ENCODE measurements at regions of chr11 and their contacts with region 1.

Region 1: DNA sequence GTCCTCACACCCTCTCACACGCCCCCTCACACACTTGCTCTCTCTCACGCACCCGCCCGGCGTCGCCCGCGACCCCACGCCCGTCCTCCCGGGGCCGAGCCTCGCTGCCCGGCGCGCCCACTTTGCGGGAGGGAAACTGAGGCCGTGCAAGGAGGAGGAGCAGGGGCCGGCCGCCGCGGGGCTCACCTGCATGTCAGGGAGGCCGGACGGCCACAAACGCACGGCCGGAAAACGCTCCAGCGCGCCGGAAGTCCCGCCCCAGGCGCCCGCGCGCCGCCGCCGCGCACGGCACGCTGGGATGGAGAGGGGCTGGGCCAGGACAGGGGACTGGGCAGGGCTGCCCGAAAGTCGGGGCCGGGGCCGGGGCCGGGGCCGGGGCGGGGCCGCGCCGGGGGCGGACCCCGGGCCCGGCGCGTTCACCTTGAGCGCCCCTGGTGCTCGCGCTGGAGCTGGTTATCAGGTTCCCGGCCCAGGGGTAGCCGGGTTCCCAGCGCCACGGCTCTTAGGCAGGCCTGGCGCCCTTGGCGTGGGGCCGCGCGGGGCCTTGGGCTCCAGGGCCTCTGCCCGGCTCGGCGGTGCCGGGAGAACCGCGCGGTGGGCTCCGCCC is at the start of gene CHID1:
- DNase-seq: peak; percentile 98
- H3K4me3 Mint-ChIP-seq: peak within 1 kb of the TSS; percentile 97
- H3K27ac Mint-ChIP-seq: peak within 1 kb of the TSS; percentile 94
- H3K4me1 Mint-ChIP-seq: peaks cover 18% of the 10 kb centered on the region
- H3K27me3 Mint-ChIP-seq: no peaks in the 10 kb centered on the region
- total RNA-seq, gene CHID1: 99.7 and 109 TPM in 2 replicates

Region 2: DNA sequence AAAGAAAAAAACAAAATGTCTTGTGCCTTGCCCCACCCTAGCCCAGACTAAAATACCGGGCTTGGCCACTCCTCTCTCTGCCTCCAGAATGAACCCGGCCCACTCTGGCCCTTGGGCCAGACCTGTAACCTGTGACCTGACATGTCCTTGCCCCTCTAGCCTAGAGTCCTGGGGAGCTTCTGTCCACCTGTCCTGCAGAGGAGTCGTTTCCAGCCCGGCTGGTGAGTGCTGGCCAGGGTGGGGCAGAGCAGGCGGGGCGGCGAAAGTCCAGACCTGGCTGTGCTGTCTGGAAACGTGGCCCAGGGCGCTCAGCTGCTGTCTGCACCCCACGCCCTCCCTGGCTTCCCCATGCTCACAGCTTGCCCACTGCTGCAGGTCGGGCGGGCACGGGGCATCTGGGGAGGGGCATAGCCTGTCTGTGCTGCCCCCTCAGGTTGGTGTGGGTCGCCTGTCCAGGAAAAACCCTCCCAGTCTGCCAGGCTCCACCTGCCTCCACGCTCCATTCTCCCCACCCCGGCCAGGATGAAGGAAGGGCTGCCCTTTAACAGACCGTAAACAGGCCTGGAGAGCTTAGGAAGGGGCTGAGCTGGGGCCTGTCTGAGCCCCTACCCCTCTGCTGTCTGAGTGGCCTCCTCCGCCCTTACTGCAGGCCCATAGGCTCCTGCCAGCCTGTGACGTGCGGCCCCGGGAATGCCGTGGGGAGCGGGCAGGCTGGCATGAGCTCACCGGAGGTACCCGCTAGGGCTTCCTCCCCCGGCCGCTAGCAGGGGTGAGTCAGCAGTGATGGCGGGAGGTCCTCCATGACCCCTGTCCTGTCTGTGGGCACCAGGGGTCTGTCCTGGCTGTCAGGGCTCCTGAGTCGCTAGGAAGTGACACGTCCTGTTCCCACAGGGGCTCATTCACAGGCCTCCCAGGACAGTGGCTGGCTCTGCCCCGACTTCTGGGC is 76.0 kb before region 1 on chr11:
- intact Hi-C with region 1: no loop called
- DNase-seq: no peak
- H3K4me3 Mint-ChIP-seq: peak overlapping the region; percentile 74
- H3K27ac Mint-ChIP-seq: no peak overlapping the region
- H3K4me1 Mint-ChIP-seq: peaks cover 15% of the 10 kb centered on the region
- H3K27me3 Mint-ChIP-seq: peaks cover 21% of the 10 kb centered on the region

Region 3: DNA sequence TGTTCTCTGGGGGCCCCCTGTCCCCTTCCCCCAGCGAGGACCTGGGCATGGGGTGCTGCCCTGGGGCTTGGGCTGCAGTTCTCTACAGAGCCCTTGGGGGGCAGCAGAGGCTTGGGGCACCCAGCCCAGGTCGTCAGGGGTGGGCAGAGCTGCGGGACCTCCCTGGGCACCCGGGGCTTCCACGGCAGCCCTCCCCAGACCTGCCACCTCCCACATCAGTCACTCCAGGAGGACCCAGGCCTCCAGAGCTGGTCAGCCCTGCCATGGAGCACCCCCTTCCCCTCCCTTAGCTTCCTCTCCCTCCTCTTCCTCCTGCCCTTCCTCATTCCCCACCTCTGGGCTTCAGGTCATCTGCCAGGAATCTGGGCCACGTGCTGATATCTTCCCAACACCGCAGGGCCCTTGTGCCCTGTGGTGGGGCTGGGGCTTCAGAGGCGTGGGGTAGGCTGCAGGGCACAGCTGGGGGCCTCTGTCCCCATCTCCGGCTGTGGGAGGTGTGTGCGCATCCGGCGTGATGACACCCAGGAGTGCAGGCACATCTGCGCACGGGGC is 62.2 kb before region 1 on chr11:
- intact Hi-C with region 1: loop called (anchors 2 kb)
- DNase-seq: peak; percentile 92
- H3K4me3 Mint-ChIP-seq: peak overlapping the region; percentile 73
- H3K27ac Mint-ChIP-seq: no peak overlapping the region
- H3K4me1 Mint-ChIP-seq: peaks cover 5% of the 10 kb centered on the region
- H3K27me3 Mint-ChIP-seq: peaks cover 7% of the 10 kb centered on the region

Region 4: DNA sequence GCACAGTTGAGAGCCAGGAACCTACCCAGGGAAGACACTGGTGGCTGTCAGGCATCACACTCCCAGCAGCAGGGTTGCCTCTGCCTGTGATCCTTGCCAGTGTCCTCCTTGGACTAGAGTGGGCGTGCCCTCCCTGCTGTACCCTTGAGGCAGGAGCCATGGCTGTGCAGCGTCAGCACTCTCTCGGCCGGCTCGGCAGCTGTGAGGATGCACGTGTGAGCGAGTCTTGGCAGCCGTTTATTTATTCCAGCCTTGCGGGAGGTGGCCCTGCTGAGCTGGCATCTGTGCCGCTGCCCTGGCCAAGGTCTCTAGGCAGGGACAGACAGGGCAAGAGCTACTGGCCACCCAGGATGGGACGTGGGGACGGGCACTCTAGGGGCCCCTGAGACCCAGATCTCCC is 34.2 kb before region 1 on chr11:
- intact Hi-C with region 1: loop called (anchors 2 kb)
- DNase-seq: no peak
- H3K4me3 Mint-ChIP-seq: no peak overlapping the region
- H3K27ac Mint-ChIP-seq: no peak overlapping the region
- H3K4me1 Mint-ChIP-seq: no peaks in the 10 kb centered on the region
- H3K27me3 Mint-ChIP-seq: no peaks in the 10 kb centered on the region

Region 5: DNA sequence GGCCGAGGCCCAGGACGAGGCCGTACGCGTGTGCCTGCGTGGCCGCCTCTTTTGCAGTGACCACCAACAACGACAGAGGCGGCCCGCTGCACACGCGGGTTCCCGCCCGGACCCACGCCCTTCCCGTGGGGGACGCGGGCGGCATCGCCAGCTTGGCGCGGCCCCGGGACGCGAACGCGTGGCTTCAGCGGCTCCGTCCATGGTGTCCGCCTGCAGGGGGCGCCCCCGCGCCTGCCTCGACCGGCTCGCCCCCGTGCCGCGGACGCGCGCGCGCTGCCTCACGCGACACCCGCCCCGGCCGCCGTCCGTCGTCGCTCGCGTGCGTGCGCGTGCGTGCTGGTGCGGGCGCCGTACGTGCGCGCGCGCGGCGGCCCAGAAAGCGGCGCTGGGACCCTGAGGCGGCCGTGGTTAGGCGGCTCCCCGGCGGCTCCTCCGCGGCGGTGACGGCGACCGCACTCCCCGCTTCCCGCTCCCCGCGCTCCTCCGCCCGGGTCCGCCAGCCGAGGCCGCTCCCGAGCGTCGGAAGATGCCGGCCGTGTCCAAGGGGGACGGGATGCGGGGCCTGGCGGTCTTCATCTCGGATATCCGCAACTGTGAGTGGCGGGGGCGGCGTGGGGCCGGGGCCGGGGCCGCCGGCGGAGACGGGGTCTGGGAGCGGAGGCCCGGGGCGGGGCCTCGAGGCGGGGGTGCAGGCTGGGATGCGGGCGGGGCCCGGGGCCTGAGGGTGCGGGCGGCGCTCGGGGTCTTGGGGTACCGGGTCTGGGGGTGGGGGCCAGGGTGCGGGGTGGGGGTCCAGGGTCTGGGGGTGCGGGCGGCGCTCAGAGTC is 15.0 kb after region 1 on chr11 and contains the start of gene AP2A2:
- intact Hi-C with region 1: loop called (anchors 1 kb)
- DNase-seq: peak; percentile 98
- H3K4me3 Mint-ChIP-seq: peak within 1 kb of the TSS; percentile 84
- H3K27ac Mint-ChIP-seq: peak within 1 kb of the TSS; percentile 58
- H3K4me1 Mint-ChIP-seq: peaks cover 17% of the 10 kb centered on the region
- H3K27me3 Mint-ChIP-seq: no peaks in the 10 kb centered on the region
- total RNA-seq, gene AP2A2: 51.4 and 53.8 TPM in 2 replicates

Measured in activated CD4-positive, alpha-beta T cell treated with anti-CD3 and anti-CD28 coated beads, Interleukin-2, amount 10 ng/mL, durations not matched to agents 24 days and 14 days (primary cell).